Sigmoid colon (tissue), 7 donors: ENCODE measurements at regions of chr20 and their contacts with region 1.

Region 1: DNA sequence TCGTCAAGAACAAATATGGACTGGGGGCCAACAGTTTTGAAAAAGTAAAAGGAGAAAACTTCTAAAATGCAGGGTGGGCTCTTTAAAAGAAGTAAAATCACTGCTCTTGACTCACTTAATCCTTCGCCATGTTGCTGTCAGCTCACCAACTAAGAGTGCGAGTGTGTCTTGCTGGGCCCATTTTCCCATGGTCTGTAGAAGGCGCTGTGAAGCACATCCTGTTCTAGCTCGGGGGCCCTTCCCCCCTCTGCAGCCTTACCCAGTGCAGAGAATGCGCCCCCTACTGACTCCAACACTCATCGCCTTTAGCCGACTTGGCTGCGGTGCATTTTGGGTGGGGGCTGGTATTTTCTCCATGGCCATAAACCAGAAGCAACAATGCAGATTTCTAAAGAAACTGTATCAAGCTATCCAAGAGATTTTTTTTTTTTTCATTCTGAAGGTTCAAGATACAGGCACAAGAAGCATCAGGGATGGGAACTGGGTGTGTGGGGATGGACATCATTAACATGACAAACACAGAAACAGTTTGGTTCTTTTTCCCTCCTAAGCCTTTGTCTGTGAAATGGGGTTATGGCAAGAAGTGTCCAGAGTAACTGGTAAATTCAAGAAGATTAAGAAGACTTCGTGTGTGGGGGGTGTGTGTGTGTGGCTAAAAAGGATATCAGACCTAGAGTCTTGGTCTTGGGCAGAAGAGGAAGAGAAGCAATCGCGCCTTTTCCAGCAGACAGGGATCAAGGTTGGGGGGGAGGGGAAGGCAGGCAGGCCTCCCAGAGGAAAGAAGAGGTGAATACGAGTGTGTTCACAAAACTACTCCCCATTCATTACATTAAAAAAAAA is 1.7 kb downstream of the ADNP start:
- DNase-seq: peak; percentile 94
- H3K4me3 ChIP-seq: peak overlapping the region; percentile 79 to 89 (median 84)
- H3K27ac ChIP-seq: peak overlapping the region; percentile 76 to 96 (median 90)
- H3K4me1 ChIP-seq: peaks cover 0 to 58% (median 38%) of the 10 kb centered on the region in 4 donors
- H3K27me3 ChIP-seq: no peaks in the 10 kb centered on the region
- CTCF ChIP-seq: peak; percentile 75 to 91 (median 84)
- EP300 ChIP-seq: no peak
- POLR2A ChIP-seq: no peak

Region 2: DNA sequence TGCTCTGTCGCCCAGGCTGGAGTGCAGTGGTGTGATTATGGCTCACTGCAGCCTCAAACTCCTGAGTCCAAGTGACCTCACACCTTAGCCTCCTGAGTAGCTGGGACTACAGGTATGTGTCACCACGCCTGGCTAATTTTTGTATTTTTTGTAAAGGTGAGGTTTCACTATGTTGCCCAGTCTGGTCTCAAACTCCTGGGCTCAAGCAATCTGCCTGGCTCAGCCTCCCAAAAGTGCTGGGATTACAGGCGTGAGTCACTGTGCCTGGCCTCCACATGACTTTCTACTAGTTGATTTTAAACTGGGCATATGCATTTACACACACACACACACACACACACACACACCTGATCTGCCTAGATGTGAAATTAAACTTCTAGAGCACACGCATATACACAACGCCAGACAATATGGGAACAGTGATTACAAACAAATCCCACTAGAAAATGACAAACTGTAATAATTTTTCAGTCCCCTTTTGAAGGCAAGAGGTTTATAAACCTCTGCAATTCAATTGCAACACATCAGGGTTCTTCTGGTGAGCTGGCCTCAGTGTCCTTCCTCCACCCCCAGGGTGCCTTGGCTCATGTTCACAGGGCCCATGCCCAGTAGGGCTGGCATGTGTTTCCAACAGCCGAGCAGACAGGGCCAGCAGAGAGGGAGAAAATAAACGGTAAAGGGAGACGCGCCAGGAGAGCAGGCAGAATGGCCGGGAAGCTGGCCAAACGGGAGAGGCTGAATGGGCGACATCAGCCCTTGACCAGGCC is 166.9 kb before region 1 on chr20:
- intact Hi-C with region 1: no loop called
- DNase-seq: peak; percentile 96
- H3K4me3 ChIP-seq: no peak overlapping the region
- H3K27ac ChIP-seq: peak overlapping the region; percentile 71 to 79 (median 76)
- H3K4me1 ChIP-seq: peaks cover 0 to 23% (median 21%) of the 10 kb centered on the region in 4 donors
- H3K27me3 ChIP-seq: no peaks in the 10 kb centered on the region
- CTCF ChIP-seq: no peak
- EP300 ChIP-seq: peak in 2 of 4 donors; percentile 36 to 64
- POLR2A ChIP-seq: no peak

Region 3: GRCh38 chr20:50790651-50791277 is 138.8 kb before region 1 on chr20:
- intact Hi-C with region 1: loop called (anchors 1 kb)
- DNase-seq: peak; percentile 94
- H3K4me3 ChIP-seq: peak overlapping the region in 2 of 4 donors; percentile 22 to 28
- H3K27ac ChIP-seq: peak overlapping the region; percentile 78 to 85 (median 82)
- H3K4me1 ChIP-seq: peaks cover 0 to 57% (median 45%) of the 10 kb centered on the region in 4 donors
- H3K27me3 ChIP-seq: no peaks in the 10 kb centered on the region
- CTCF ChIP-seq: peak; percentile 50 to 80 (median 60)
- EP300 ChIP-seq: peak in 1 of 4 donors; percentile 66
- POLR2A ChIP-seq: no peak

Region 4: DNA sequence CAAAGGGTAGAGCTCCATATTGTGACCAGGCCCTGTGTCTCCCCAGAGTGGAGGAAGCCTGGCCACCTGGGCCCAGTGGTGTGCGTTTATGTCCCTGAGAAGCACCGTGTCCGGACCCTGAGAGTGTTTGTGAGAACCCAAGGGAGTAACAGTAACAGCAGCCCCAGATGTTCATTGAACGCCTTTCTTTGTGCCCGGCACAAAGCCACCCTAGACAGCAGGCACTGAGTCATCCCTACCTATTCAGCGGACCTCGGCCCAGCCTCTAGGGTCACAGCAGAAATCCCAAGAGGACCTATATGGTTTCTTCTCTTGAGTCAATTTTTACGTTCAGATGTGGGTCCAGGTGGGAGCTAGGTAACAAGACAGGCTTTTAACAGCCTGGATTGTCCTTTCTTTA is 110.2 kb before region 1 on chr20:
- intact Hi-C with region 1: loop called (anchors 2 kb)
- DNase-seq: no peak
- H3K4me3 ChIP-seq: no peak overlapping the region
- H3K27ac ChIP-seq: no peak overlapping the region
- H3K4me1 ChIP-seq: peaks cover 0 to 12% (median 7%) of the 10 kb centered on the region in 4 donors
- H3K27me3 ChIP-seq: no peaks in the 10 kb centered on the region
- CTCF ChIP-seq: no peak
- EP300 ChIP-seq: no peak
- POLR2A ChIP-seq: no peak

Region 5: DNA sequence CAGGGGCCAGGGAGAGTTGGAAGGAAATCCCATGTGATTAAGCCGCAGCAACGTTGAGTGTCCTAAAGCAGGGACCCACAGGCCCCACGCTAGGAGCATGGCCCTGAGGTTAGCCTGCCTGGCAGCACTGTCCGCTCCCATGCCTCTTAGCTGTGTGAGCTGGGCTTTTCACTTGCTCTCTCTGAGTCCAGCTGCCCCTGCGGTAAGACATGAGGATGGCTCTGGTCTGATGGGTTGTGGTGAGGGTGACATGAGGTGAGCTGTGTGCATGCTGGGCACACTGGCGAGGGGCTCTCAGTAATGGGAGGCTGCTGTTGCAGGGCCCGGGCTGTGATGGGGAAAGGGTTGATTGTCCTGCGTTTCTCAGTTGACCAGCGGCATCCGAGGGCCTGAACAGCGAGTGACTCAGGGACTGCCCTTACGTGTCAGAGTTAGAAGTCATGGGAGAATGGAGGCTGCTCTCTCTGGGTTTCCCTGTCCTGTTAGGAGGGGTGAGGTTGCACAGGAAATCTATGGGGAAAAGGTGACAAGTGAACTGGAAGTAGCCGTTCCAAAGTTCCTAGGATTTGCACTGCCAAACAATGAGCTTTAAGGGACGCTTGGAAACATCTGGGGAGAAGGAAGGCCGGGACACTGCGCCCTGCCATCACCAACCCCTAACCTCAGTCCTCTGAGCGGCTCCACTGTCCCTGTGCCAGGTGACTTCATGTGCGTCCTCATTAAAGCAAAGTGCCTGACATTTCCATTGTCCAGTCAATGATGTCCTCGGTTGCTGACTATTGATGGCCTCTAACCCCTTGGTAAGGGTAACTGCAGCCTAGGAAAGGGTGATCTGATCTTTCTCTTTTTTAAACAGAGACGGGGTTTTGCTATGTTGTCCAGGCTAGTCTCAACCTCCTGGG is 49.6 kb before region 1 on chr20:
- intact Hi-C with region 1: no loop called
- DNase-seq: no peak
- H3K4me3 ChIP-seq: no peak overlapping the region
- H3K27ac ChIP-seq: no peak overlapping the region
- H3K4me1 ChIP-seq: no peaks in the 10 kb centered on the region
- H3K27me3 ChIP-seq: no peaks in the 10 kb centered on the region
- CTCF ChIP-seq: no peak
- EP300 ChIP-seq: no peak
- POLR2A ChIP-seq: no peak

Region 6: DNA sequence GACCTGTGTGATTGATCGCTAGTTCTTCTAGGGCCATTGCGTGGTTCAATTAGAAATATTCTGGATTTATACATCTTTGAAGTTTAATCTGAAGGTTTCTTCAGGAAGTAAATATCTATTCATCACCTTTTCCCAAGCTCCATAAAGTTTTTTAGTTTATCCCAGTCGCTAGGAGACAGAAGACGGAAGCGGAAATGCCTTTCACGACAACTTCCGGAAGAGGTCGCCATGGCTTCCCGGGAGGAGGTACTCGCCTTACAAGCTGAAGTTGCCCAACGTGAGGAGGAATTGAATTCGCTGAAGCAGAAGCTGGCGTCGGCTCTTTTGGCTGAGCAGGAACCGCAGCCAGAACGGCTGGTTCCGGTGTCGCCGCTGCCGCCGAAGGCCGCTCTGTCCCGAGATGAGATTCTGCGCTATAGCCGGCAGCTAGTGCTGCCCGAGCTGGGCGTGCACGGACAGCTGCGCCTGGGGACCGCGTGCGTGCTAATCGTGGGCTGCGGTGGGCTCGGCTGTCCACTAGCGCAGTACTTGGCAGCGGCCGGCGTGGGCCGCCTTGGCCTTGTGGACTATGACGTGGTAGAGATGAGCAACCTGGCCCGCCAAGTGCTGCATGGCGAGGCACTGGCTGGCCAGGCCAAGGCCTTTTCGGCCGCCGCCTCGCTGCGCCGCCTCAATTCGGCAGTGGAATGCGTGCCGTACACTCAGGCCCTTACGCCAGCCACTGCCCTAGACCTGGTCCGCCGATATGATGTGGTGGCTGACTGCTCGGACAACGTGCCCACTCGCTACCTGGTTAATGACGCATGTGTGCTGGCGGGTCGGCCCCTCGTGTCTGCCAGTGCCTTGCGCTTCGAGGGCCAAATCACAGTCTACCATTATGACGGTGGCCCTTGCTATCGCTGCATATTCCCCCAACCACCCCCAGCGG is 29.4 kb after region 1 on chr20 and contains the start of gene MOCS3:
- intact Hi-C with region 1: loop called (anchors 1 kb)
- DNase-seq: peak; percentile 93
- H3K4me3 ChIP-seq: peak within 1 kb of the TSS; percentile 70 to 93 (median 79)
- H3K27ac ChIP-seq: peak within 1 kb of the TSS; percentile 82 to 92 (median 88)
- H3K4me1 ChIP-seq: peaks cover 0 to 54% (median 46%) of the 10 kb centered on the region in 4 donors
- H3K27me3 ChIP-seq: no peaks in the 10 kb centered on the region
- CTCF ChIP-seq: no peak
- EP300 ChIP-seq: no peak
- POLR2A ChIP-seq: no peak
- total RNA-seq, gene MOCS3: 2.8 to 3.9 (median 3.6) TPM

Region 7: GRCh38 chr20:51111290-51111689 is 181.8 kb after region 1 on chr20:
- intact Hi-C with region 1: no loop called
- DNase-seq: no peak
- H3K4me3 ChIP-seq: no peak overlapping the region
- H3K27ac ChIP-seq: no peak overlapping the region
- H3K4me1 ChIP-seq: no peaks in the 10 kb centered on the region
- H3K27me3 ChIP-seq: peaks cover 3 to 76% (median 15%) of the 10 kb centered on the region in 3 donors
- CTCF ChIP-seq: no peak
- EP300 ChIP-seq: no peak
- POLR2A ChIP-seq: no peak